ENCODE measurements at regions of chr9 and their contacts with region 1.

Region 1: DNA sequence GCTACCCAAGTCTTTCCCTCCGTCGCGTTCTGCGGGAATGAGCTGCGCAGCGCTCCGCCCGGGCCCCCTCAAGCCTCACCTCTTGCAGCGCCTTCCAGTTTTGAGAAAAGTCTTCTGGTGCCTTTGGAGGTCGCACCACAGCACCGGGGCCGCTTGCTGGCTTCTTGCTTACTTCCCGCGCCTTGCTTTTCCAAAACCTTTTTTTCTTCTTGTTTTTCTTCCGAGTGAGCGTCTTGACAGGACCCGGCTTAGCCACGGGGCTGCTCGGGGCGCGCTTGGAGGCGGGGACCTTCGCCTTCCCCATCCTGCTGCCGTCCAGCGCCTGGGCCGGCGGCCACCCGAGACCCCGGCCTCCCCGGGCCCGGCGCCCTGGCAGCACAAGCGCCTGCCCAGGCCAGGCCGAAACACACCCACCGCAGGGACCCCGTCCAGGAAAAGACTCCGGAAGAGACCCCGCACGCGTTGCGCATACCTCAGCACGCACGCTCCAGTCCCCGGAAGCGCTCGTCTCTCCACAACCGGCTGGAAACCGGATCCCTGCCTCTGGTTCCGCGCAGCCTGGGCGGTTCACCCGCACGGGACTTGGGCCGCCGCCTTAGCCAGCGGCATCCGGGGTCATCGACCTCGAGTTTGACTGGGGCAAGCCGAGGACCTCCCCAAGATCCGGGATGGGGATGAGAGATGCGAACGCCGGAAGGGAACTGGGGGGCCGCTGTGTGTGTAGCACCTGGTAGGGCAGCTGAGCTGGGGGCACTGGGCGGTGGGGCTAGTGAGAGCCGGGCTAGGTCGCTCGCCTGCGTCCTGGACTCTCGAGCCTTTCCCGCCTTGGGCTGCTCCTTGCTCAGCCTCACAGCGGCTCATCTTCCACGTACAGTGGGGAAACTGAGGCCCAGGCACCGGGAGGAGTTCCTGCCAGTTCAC is at the start of gene REXO4:
- DNase-seq: peak; percentile 86
- total RNA-seq, gene REXO4: 25.0 and 38.8 TPM in 2 replicates

Region 2: GRCh38 chr9:133356391-133357091 is 61.3 kb before region 1 on chr9 and contains the starts of genes SURF1 and SURF2:
- in situ Hi-C with region 1: no loop called
- DNase-seq: peak; percentile 82
- total RNA-seq, gene SURF1: 33.8 and 51.7 TPM in 2 replicates
- total RNA-seq, gene SURF2: 32.3 and 47.5 TPM in 2 replicates

Region 3: DNA sequence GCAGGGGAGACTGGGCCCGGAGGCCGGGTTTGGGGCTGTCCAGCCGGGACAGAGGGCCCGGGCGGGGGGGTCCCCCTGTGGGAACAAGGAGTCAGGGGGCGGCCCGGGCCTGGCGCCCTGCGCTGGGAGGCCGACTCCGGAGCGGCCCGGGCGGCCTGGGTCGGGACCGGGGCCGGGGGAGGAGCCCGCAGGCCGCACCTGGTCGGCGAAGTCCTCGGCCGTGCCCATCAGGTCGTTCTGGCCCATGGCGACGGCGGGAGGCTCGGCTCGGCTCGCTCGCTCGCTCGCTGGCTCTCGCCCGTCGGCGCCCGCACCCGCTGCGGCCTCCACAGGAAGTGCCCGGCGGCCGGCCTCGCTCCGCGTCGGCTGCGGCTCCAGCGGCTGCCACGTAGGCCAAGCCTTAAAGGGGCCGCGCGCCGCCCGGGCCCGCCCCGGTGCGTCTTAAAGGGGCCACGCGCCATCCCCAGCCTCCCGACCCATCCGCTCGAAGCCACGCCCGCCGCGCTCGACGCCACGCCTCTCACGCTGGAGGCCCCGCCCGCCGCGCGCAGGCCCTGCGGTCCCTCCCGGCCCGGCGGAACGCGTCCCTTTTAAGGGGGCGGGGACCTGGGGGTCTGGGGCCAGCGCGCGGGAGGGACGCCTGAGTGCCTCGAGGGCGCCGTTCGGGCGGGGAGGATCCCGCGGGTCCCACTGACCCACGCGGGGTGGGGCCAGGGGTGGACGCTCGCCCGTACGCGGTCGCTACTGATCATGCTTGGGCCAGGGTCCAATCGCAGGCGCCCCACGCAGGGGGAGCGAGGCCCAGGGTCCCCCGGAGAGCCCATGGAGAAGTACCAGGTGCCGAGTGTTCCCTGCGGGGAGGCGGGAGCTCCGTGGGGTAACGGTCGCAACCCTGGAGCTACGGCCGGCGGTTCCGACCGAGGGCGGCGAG is 41.8 kb before region 1 on chr9 and contains the starts of genes STKLD1 and SURF4:
- in situ Hi-C with region 1: loop called (anchors 5 kb)
- DNase-seq: peak; percentile 95
- total RNA-seq, gene STKLD1: 0.37 and 1.1 TPM in 2 replicates
- total RNA-seq, gene SURF4: 333 and 361 TPM in 2 replicates

Region 4: DNA sequence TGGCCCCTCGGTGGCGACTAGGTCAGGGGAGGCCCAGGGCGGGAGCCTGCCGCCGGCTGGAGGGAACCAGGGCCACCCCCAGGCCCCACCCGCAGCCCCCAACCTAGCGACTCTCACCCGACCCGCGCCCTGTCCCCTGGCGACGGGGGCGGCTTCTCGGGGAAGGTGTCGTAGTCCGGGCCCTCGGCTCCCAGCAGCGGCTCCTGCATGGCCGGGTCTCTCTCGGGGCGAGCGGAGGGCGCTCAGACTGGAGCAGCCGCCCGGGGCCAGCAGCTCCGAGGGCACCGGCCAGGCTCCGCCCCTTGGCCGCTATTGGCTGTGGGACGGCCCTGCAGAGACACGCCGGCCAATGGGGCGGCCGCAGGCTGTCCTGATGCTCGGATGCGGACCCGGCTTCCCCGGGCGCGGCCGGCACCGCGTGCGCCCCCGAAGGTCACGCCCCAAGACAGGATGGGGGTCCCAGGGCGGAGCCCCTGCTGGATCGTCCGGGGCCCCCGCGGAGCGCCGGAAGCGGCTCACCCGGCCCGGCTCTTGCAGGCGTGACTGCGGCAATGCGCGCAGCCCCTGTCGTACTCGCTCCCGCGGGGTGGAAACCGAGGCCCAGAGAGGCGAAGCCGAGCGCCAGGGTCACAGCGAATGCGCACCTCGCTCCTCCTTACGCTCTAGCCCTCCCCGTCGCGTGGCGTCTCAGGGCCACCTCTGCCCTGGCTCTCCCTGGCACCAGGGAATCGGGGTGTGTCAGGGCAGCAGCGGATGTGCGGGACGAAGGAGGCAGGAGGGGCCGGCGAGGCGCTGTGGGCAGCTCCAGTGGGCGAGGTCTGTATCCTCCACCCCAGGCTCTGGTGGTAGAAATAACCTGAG is 61.3 kb after region 1 on chr9 and contains the start of gene SLC2A6:
- in situ Hi-C with region 1: no loop called
- DNase-seq: peak; percentile 93
- total RNA-seq, gene SLC2A6: 5.5 and 6.8 TPM in 2 replicates